ENCODE measurements at regions of chr10 and their contacts with region 1.

Region 1: GRCh38 chr10:71696628-71697326 is 22.8 kb downstream of the C10orf105 start:
- DNase-seq: no peak
- ATAC-seq: peak; percentile 56
- H3K4me3 ChIP-seq: no peak overlapping the region
- H3K27ac ChIP-seq: no peak overlapping the region
- H3K4me1 ChIP-seq: peaks cover 64% of the 10 kb centered on the region
- H3K27me3 ChIP-seq: no peaks in the 10 kb centered on the region
- CTCF ChIP-seq: peak; percentile 77 to 98 (median 96)
- EP300 ChIP-seq: no peak
- POLR2A ChIP-seq: no peak
- RAD21 ChIP-seq: peak; percentile 61

Region 2: DNA sequence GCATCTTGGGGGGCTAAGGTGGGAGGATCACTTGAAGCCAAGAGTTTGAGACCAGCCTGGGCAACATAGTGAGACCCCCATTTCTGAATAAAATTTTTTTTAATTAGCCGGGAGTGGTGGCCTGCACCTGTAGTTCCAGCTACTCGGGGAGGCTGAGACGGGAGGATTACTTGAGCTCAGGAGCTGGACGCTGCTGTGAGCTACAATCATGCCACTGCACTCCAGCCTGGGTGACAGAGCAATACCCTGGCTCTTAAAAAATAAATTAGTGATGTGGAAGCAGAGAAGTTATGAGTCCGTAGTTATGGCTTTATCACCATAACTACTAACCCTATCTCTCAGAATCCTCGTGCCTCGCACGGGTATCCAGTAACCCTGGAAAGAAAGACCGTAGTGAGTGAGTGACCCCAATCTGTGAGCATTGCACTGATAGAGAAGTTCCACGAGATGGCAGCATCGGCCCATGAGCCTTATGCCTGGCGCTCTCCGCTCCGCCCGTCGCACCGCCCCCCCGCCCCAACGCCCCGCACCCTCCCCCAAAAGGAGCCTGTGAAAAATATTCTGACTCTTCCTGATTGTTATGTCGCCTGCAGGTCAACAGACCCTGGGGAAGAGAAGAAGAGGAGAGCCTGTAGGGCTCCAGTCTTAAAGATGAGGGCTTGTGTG is 382.6 kb before region 1 on chr10:
- CTCF ChIA-PET with region 1: interaction called, 92 read pairs
- POLR2A ChIA-PET with region 1: no interaction called
- RAD21 ChIA-PET with region 1: interaction called, 20 read pairs
- SMC1A ChIA-PET with region 1: interaction called, 7 read pairs
- in situ Hi-C with region 1: loop called (anchors 5 kb)
- intact Hi-C with region 1: no loop called
- DNase-seq: no peak
- ATAC-seq: peak; percentile 55
- H3K4me3 ChIP-seq: no peak overlapping the region
- H3K27ac ChIP-seq: no peak overlapping the region
- H3K4me1 ChIP-seq: peaks cover 12% of the 10 kb centered on the region
- H3K27me3 ChIP-seq: no peaks in the 10 kb centered on the region
- CTCF ChIP-seq: peak; percentile 62 to 91 (median 76)
- EP300 ChIP-seq: no peak
- POLR2A ChIP-seq: no peak
- RAD21 ChIP-seq: peak; percentile 74

Region 3: DNA sequence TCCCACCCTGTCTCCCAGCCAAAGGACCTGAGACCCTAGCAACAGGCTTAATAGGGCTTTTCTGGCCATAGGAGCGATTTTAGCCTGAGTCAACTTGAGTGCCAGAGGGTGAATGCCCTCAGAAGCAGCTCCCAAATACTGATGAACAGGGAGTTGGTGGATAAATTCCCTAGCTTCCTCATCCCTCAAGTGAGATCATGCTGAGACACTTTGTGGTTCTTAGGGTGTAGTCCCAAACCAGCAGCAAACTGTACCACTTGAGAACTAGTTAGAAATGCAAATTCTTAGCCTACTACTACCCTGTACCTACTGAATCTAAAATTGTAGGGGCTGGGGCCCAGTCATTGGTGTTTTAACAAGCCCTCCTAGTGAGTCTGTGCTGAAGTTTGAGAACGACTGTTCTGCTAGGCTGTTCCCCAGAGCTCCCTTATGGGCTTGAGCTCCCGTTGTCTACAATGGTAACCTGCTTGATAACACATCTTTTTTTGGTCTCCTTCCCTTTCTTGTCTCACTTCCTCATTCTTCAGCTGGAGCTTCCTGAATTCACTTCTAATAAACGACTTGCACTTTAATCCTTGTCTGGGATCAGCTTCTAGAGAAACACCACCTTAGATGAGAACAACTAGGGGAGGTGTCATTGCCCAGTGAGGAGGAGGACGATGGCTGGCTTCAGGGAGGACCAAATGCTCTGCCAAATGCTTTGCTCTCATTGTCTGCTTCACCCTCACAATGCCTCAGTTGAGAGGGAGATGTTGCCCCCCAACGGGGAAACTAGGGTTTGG is 318.2 kb before region 1 on chr10:
- CTCF ChIA-PET with region 1: interaction called, 30 read pairs
- POLR2A ChIA-PET with region 1: interaction called, 9 read pairs
- RAD21 ChIA-PET with region 1: interaction called, 3 read pairs
- SMC1A ChIA-PET with region 1: interaction called, 9 read pairs
- in situ Hi-C with region 1: loop called (anchors 10 kb)
- intact Hi-C with region 1: loop called (anchors 5 kb)
- DNase-seq: no peak
- ATAC-seq: no peak
- H3K4me3 ChIP-seq: no peak overlapping the region
- H3K27ac ChIP-seq: peak overlapping the region; percentile 25; the same call in 1 of the 2 replicates
- H3K4me1 ChIP-seq: peaks cover 36% of the 10 kb centered on the region
- H3K27me3 ChIP-seq: no peaks in the 10 kb centered on the region
- CTCF ChIP-seq: no peak
- EP300 ChIP-seq: no peak
- POLR2A ChIP-seq: no peak
- RAD21 ChIP-seq: peak; percentile 15; the same call in 1 of the 2 replicates

Region 4: DNA sequence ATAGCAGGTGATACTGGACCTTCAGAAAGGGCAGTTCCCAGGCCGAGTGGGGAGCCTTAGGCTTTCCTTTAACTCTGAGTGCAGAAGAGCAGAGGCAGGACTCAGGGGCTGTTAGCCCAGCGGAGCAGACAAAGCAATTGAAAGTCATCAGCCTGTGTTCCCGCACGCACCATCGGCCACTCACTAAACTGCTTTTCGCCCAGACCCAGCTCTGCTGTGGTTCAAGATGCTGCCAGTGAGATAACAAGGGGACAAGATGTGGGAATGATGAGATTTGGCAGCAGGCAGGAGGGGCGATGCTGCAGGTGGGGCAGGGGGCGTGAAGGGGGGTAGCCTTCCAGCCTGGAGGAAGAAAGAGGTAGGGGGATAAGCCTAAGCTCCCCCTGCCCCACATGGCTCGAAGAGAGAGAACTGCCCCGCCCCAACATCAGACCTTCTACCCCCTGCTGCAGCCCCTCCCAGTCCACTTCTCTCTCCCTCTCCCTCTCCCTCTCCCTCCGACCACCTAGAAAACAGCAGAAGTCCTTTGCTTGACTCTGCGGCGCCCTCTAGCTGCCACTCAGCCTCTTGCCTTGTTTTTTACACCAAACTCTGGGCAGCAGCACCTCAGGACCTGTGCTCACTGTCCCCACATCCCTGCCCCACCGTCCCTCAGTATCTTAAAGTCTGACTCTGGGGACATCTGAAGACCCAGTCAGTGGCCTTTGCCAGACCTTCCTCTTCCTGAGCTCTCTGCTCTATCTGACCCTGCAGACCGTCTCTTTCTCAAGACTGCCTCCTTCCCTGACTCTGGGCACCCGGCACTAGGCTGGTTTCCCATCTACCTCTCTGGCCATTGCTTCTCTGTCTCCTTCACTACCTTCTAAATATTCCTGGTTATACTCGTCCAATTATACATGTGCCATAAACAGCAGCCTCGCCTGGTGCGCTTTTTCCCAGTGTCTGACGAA is 87.7 kb before region 1 on chr10:
- CTCF ChIA-PET with region 1: interaction called, 3 read pairs
- POLR2A ChIA-PET with region 1: no interaction called
- RAD21 ChIA-PET with region 1: interaction called, 11 read pairs
- SMC1A ChIA-PET with region 1: interaction called, 3 read pairs
- in situ Hi-C with region 1: no loop called
- intact Hi-C with region 1: no loop called
- DNase-seq: no peak
- ATAC-seq: peak; percentile 82
- H3K4me3 ChIP-seq: no peak overlapping the region
- H3K27ac ChIP-seq: no peak overlapping the region
- H3K4me1 ChIP-seq: no peaks in the 10 kb centered on the region
- H3K27me3 ChIP-seq: no peaks in the 10 kb centered on the region; a peak in 2 of 4 replicates
- CTCF ChIP-seq: peak; percentile 75 to 84 (median 80)
- EP300 ChIP-seq: no peak
- POLR2A ChIP-seq: no peak
- RAD21 ChIP-seq: peak; percentile 64

Region 5: GRCh38 chr10:71666639-71667386 is 30.0 kb before region 1 on chr10:
- CTCF ChIA-PET with region 1: interaction called, 47 read pairs
- POLR2A ChIA-PET with region 1: interaction called, 5 read pairs
- RAD21 ChIA-PET with region 1: interaction called, 8 read pairs
- SMC1A ChIA-PET with region 1: interaction called, 12 read pairs
- in situ Hi-C with region 1: no loop called
- intact Hi-C with region 1: no loop called
- DNase-seq: peak; percentile 5
- ATAC-seq: peak; percentile 57
- H3K4me3 ChIP-seq: no peak overlapping the region
- H3K27ac ChIP-seq: no peak overlapping the region
- H3K4me1 ChIP-seq: peaks cover 17% of the 10 kb centered on the region
- H3K27me3 ChIP-seq: no peaks in the 10 kb centered on the region; a peak in 1 of 4 replicates
- CTCF ChIP-seq: no peak
- EP300 ChIP-seq: 0 out of 4 replicates have a peak, but pooled peaks of 1 of the 2 experiments have one; percentile 26
- POLR2A ChIP-seq: no peak
- RAD21 ChIP-seq: no peak

Region 6: GRCh38 chr10:71708301-71708703 is 11.5 kb after region 1 on chr10:
- CTCF ChIA-PET with region 1: interaction called, 116 read pairs
- POLR2A ChIA-PET with region 1: no interaction called
- RAD21 ChIA-PET with region 1: interaction called, 32 read pairs
- SMC1A ChIA-PET with region 1: interaction called, 51 read pairs
- in situ Hi-C with region 1: no loop called
- intact Hi-C with region 1: no loop called
- DNase-seq: no peak
- ATAC-seq: peak; percentile 88
- H3K4me3 ChIP-seq: no peak overlapping the region
- H3K27ac ChIP-seq: no peak overlapping the region
- H3K4me1 ChIP-seq: peaks cover 8% of the 10 kb centered on the region
- H3K27me3 ChIP-seq: no peaks in the 10 kb centered on the region; a peak in 1 of 4 replicates
- CTCF ChIP-seq: peak; percentile 82 to 97 (median 93)
- EP300 ChIP-seq: no peak
- POLR2A ChIP-seq: no peak
- RAD21 ChIP-seq: peak; percentile 89

Region 7: DNA sequence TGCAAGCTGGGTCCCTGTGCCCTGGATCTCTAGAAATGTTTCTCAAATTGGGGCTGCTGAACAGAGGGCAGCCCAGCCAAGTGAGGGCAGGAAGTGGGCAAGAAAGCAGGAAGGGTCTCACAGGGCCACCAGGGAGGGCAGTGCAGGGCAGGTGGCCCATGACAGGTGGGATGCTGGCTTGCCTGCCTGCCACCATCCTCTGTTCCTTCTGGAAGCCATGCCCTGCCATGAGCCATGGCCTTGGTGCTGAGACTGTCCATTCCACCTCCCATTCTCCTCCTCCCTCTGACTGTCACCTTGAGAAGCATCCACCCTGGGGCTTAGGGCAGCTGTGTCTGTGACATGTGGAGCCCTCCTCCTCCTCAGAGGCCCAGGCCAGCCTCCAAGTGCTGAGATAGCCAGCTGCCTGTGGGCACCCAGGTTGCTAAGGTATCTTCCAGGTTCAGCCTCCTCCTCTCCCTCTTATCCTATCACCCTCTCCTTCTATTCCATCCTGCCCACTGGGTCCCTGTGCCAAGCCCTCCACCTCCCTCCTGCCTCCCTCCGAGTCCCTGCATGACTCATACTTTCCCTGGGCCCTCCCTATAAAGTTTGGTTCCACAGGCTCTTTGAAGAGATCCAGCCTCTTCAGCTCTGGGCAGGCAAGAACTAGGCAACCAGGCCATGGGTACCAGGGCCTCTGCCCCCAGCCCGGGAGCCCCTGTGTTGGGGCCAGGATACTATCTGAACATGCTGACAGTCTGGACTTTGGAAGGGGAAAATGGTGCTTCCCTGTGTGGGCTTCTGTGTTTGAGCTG is 75.2 kb after region 1 on chr10:
- CTCF ChIA-PET with region 1: interaction called, 97 read pairs
- POLR2A ChIA-PET with region 1: interaction called, 6 read pairs
- RAD21 ChIA-PET with region 1: interaction called, 53 read pairs
- SMC1A ChIA-PET with region 1: interaction called, 31 read pairs
- in situ Hi-C with region 1: no loop called
- intact Hi-C with region 1: loop called (anchors 2 kb)
- DNase-seq: no peak
- ATAC-seq: no peak
- H3K4me3 ChIP-seq: peak overlapping the region; percentile 76; the same call in 1 of the 2 replicates
- H3K27ac ChIP-seq: peak overlapping the region; percentile 14; the same call in 1 of the 2 replicates
- H3K4me1 ChIP-seq: peaks cover 70% of the 10 kb centered on the region
- H3K27me3 ChIP-seq: no peaks in the 10 kb centered on the region
- CTCF ChIP-seq: no peak
- EP300 ChIP-seq: no peak
- POLR2A ChIP-seq: no peak
- RAD21 ChIP-seq: no peak

Region 8: GRCh38 chr10:72048450-72049124 is 351.8 kb after region 1 on chr10:
- CTCF ChIA-PET with region 1: no interaction called
- POLR2A ChIA-PET with region 1: no interaction called
- RAD21 ChIA-PET with region 1: no interaction called
- SMC1A ChIA-PET with region 1: no interaction called
- in situ Hi-C with region 1: no loop called
- intact Hi-C with region 1: no loop called
- DNase-seq: peak; percentile 81
- ATAC-seq: peak; percentile 98
- H3K4me3 ChIP-seq: no peak overlapping the region
- H3K27ac ChIP-seq: no peak overlapping the region
- H3K4me1 ChIP-seq: peaks cover 3% of the 10 kb centered on the region; the same call in 1 of the 2 replicates
- H3K27me3 ChIP-seq: no peaks in the 10 kb centered on the region
- CTCF ChIP-seq: peak; percentile 99 to 100 (median 99); a peak in 5 of 6 replicates
- EP300 ChIP-seq: no peak
- POLR2A ChIP-seq: no peak
- RAD21 ChIP-seq: peak; percentile 98